Activated CD4-positive, alpha-beta T cell treated with anti-CD3 and anti-CD28 coated beads for 36 hours (primary cell): ENCODE measurements at regions of chr4 and their contacts with region 1.

Region 1: GRCh38 chr4:185005216-185005819 is 13.0 kb upstream of the HELT start:
- DNase-seq: peak; percentile 91
- ATAC-seq: peak; percentile 98
- H3K4me3 Mint-ChIP-seq: peak overlapping the region; percentile 31
- H3K27ac Mint-ChIP-seq: no peak overlapping the region
- H3K4me1 Mint-ChIP-seq: peaks cover 4% of the 10 kb centered on the region
- H3K27me3 Mint-ChIP-seq: peaks cover 39% of the 10 kb centered on the region

Region 2: DNA sequence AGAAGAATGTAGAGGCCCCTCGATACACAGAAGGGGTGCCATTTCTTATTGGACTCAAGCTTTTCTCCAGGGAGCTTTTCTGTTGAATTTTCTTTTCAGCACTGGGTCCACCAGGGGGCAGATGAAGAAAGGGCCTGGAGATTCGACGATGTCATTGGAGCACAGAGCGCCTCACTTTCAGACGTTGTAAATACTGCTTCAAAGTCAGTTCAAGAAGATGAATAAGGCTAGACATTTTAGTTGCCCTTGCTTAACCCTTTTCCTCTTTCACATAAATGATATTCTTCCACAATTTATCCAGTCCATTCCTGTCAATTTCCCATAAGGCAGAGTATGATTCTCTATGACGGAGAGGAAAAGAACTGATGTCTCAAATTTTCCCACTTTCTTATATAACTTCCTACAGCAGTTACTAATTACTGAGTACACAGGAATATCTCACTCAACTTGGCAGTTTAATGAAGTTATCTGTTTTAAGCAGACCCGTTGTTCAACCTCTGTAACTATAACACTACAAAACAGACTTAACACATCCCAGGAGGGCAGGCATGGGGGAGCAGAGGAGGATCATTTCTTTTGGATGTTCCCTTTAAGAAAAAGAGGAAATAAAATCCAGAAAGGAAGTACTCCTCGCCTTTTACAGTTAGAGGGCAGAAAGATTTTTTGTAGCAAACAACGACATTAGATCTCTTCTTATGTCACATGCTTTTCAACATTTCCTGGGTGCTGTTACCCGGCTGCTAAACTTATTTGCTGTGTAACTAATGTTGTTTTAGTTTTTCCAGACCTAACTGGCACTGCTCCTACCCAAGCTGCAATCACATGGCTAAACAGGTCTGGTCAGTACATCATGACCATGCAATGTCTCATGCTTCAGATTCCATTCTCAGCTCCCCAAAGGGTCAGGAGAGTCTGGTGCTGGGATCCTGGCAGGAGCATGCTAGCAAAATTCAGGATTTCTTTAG is 259.2 kb before region 1 on chr4:
- CTCF ChIA-PET with region 1: no interaction called
- POLR2A ChIA-PET with region 1: no interaction called
- intact Hi-C with region 1: loop called (anchors 2 to 5 kb)
- DNase-seq: peak; percentile 87
- ATAC-seq: peak; percentile 89
- H3K4me3 Mint-ChIP-seq: no peak overlapping the region
- H3K27ac Mint-ChIP-seq: peak overlapping the region; percentile 32
- H3K4me1 Mint-ChIP-seq: peaks cover 12% of the 10 kb centered on the region
- H3K27me3 Mint-ChIP-seq: no peaks in the 10 kb centered on the region

Region 3: GRCh38 chr4:185033950-185034349 is 28.6 kb after region 1 on chr4:
- CTCF ChIA-PET with region 1: interaction called, 16 read pairs
- POLR2A ChIA-PET with region 1: no interaction called
- intact Hi-C with region 1: loop called in 1 of 2 experiments (anchors 1 kb)
- DNase-seq: no peak
- ATAC-seq: no peak
- H3K4me3 Mint-ChIP-seq: no peak overlapping the region
- H3K27ac Mint-ChIP-seq: no peak overlapping the region
- H3K4me1 Mint-ChIP-seq: no peaks in the 10 kb centered on the region
- H3K27me3 Mint-ChIP-seq: peaks cover 21% of the 10 kb centered on the region

Region 4: DNA sequence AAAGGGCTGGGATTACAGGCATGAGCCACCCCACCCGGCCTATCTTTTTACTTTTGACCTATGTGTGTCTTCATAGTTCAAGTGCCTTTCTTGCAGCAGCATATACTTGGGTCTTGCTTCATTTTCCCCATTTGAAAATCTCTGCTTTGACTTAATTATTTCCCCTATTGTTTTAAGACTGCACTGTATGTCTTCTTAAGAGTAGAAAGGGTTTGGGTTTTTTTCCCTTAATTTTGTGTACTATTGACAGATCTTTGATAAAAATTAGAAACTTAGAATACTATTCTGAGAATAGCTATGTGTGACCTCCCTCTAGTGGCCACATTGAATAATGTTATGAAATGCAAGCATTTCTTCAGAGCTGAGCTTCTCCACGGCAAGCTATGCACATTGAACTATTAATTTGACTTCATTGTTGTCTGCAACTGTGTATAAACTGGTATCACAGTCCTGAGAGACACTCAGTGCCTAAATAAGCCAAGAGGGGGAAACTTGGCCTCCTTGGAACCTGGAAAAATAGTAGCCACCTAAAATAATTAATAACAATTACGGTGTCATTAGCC is 129.1 kb after region 1 on chr4:
- CTCF ChIA-PET with region 1: interaction called, 11 read pairs
- POLR2A ChIA-PET with region 1: no interaction called
- intact Hi-C with region 1: loop called in 1 of 2 experiments (anchors 1 kb)
- DNase-seq: no peak
- ATAC-seq: peak; percentile 70
- H3K4me3 Mint-ChIP-seq: no peak overlapping the region
- H3K27ac Mint-ChIP-seq: no peak overlapping the region
- H3K4me1 Mint-ChIP-seq: no peaks in the 10 kb centered on the region
- H3K27me3 Mint-ChIP-seq: peaks cover 28% of the 10 kb centered on the region

Region 5: GRCh38 chr4:185304944-185305690 is 299.8 kb after region 1 on chr4:
- CTCF ChIA-PET with region 1: no interaction called
- POLR2A ChIA-PET with region 1: no interaction called
- intact Hi-C with region 1: loop called in 1 of 2 experiments (anchors 2 kb)
- DNase-seq: peak; percentile 34
- ATAC-seq: peak; percentile 84
- H3K4me3 Mint-ChIP-seq: no peak overlapping the region
- H3K27ac Mint-ChIP-seq: no peak overlapping the region
- H3K4me1 Mint-ChIP-seq: no peaks in the 10 kb centered on the region
- H3K27me3 Mint-ChIP-seq: no peaks in the 10 kb centered on the region